ENCODE measurements at regions of chr10 and their contacts with region 1.

Region 1: DNA sequence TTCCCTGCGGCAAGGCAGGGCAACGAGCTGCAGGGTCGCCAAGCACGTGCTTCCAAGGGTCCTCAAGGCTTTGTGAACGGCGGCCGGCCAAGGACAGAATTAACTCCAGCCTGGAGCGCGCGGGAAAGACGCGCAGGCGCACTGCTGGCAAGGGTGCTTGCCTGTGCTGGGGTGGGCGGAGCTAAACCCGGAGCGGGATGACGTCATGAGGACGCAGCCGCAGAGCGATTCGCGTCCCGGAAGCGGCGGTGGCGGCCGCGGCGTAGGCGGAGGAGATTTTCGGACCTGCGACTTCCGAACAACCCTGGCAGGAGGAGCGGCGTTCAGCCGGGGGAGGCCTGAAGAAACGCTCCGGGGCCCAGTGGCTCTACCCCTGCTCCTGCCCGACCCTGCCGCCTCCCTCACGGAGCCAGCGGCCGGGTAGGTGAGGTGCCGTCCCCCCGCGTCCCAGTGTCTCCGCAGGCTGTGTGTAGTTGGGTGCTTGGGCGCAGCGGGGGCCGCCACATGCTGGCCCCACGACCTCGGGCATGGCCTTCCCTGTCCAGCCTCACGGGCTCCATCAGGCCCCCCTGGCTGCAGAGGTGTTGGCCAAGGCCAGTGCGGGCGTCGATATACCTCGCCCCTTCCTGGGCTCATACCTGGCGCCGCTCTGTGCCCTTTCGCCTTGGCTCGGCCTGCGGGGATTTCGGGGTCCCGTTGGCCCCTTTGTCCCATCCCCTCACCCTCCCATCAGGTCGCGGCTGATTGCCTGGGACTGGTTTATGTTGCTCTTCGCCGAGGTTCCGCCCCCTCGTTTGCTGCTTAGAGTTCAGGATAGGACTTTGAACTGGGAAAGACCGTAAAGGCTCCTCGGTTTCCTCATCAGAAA is at the start of gene ZFYVE27:
- DNase-seq: peak; percentile 94
- ATAC-seq: peak; percentile 90
- H3K4me3 Mint-ChIP-seq: peak within 1 kb of the TSS; percentile 97
- H3K27ac Mint-ChIP-seq: peak within 1 kb of the TSS; percentile 97
- H3K4me1 Mint-ChIP-seq: peaks cover 47% of the 10 kb centered on the region
- H3K27me3 Mint-ChIP-seq: no peaks in the 10 kb centered on the region
- CTCF ChIP-seq: no peak
- total RNA-seq, gene ZFYVE27: 45.3 and 65.7 TPM in 2 replicates

Region 2: DNA sequence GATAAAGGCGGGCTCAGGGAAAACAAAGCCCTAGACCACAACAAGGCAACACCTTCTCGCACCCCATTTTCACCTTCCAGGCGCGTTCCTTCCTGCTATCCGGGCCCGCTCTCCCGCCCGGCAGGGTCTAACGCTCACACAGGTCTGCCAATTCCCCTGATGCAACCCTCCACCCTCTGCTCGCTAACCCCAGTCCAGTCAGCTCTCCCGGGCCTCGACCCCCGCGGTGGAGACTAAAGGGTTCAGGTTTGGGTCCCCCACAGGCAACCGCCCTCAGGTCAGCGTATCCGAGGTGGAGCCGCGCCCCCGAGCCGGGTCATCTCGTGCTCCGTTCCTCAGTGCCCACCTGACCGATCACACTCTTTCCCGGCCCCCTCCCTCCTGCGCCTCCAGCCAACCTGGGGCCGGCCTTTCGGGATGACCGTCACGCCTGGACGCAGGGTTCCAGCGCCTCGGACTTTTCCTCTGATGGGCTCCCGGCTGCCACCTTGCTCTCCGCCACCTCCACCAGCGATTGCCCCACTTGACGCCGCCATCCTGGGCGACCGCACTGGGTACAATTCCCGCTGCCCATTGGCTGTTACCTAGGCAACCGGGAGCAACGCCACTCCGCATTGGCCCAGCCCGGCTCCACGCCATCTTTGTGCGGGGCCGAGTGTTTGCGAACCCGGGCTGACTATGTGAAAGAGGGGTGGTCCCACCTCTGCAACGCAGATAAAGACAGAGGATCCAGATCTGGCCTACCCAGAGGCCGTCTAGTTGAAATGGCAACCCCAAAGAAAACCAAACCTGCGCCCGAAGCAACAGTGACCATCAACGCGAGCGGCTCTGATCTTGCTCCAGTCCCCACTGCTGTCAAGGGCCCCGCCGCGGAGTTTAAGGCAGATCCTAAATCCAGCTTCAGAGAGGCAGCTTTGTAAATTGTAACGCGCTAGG is 103.9 kb before region 1 on chr10 and contains the start of gene MORN4:
- CTCF ChIA-PET with region 1: no interaction called
- POLR2A ChIA-PET with region 1: no interaction called
- intact Hi-C with region 1: loop called (anchors 2 kb)
- DNase-seq: peak; percentile 84
- ATAC-seq: peak; percentile 99
- H3K4me3 Mint-ChIP-seq: peak within 1 kb of the TSS; percentile 100
- H3K27ac Mint-ChIP-seq: peak within 1 kb of the TSS; percentile 83
- H3K4me1 Mint-ChIP-seq: peaks cover 16% of the 10 kb centered on the region
- H3K27me3 Mint-ChIP-seq: no peaks in the 10 kb centered on the region
- CTCF ChIP-seq: no peak
- total RNA-seq, gene MORN4: 1.5 and 2.9 TPM in 2 replicates

Region 3: DNA sequence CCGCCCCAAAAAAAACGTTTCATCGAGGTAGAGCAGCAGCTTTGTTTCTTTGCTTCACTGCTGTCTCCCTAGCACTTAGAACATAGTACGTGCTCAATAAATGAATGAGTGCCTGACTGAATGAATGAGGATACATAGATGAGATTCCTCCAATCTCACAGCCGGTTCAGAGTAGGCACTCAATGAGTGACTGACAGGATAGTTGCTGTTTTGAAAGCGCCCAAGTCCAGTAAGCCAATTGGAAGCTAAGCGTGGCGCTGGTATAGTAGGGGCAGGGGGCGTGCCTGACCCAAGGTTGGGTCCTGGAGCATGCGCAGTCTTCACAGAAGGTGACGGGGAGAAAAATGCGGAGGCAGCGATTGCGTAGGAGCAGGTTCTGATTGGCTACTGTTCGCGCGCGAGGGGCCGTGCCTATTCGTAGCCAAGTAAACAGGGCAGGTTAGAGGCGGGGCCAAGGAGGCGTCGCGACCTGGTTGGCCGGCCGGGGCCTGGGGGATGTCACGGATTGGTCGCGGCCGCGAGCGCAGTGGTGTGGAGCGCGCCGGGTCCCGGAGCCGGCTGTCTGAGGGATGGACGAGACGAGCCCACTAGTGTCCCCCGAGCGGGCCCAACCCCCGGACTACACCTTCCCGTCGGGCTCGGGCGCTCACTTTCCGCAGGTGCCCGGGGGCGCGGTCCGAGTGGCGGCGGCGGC is 96.8 kb before region 1 on chr10 and contains the start of gene PI4K2A:
- CTCF ChIA-PET with region 1: no interaction called
- POLR2A ChIA-PET with region 1: interaction called, 10 read pairs
- intact Hi-C with region 1: no loop called
- DNase-seq: peak; percentile 92
- ATAC-seq: peak; percentile 96
- H3K4me3 Mint-ChIP-seq: peak within 1 kb of the TSS; percentile 97
- H3K27ac Mint-ChIP-seq: peak within 1 kb of the TSS; percentile 90
- H3K4me1 Mint-ChIP-seq: peaks cover 23% of the 10 kb centered on the region
- H3K27me3 Mint-ChIP-seq: no peaks in the 10 kb centered on the region
- CTCF ChIP-seq: no peak
- total RNA-seq, gene PI4K2A: 15.0 and 15.1 TPM in 2 replicates

Region 4: GRCh38 chr10:97701438-97702069 is 35.6 kb before region 1 on chr10:
- CTCF ChIA-PET with region 1: interaction called, 40 read pairs
- POLR2A ChIA-PET with region 1: interaction called, 3 read pairs
- intact Hi-C with region 1: no loop called
- DNase-seq: no peak
- ATAC-seq: peak; percentile 73
- H3K4me3 Mint-ChIP-seq: no peak overlapping the region
- H3K27ac Mint-ChIP-seq: no peak overlapping the region
- H3K4me1 Mint-ChIP-seq: no peaks in the 10 kb centered on the region
- H3K27me3 Mint-ChIP-seq: peaks cover 13% of the 10 kb centered on the region
- CTCF ChIP-seq: no peak

Region 5: GRCh38 chr10:97714048-97714371 is 23.1 kb before region 1 on chr10:
- CTCF ChIA-PET with region 1: interaction called, 39 read pairs
- POLR2A ChIA-PET with region 1: interaction called, 9 read pairs
- intact Hi-C with region 1: loop called (anchors 2 kb)
- DNase-seq: peak; percentile 47
- ATAC-seq: peak; percentile 84
- H3K4me3 Mint-ChIP-seq: peak overlapping the region; percentile 97
- H3K27ac Mint-ChIP-seq: peak overlapping the region; percentile 73
- H3K4me1 Mint-ChIP-seq: peaks cover 14% of the 10 kb centered on the region
- H3K27me3 Mint-ChIP-seq: peaks cover 22% of the 10 kb centered on the region
- CTCF ChIP-seq: no peak